Activated CD4-positive, alpha-beta memory T cell treated with anti-CD3 and anti-CD28 coated beads, Interleukin-2, amount 10 ng/mL, durations not matched to agents 7 days and 5 days (primary cell): ENCODE measurements at regions of chr1 and their contacts with region 1.

Region 1: DNA sequence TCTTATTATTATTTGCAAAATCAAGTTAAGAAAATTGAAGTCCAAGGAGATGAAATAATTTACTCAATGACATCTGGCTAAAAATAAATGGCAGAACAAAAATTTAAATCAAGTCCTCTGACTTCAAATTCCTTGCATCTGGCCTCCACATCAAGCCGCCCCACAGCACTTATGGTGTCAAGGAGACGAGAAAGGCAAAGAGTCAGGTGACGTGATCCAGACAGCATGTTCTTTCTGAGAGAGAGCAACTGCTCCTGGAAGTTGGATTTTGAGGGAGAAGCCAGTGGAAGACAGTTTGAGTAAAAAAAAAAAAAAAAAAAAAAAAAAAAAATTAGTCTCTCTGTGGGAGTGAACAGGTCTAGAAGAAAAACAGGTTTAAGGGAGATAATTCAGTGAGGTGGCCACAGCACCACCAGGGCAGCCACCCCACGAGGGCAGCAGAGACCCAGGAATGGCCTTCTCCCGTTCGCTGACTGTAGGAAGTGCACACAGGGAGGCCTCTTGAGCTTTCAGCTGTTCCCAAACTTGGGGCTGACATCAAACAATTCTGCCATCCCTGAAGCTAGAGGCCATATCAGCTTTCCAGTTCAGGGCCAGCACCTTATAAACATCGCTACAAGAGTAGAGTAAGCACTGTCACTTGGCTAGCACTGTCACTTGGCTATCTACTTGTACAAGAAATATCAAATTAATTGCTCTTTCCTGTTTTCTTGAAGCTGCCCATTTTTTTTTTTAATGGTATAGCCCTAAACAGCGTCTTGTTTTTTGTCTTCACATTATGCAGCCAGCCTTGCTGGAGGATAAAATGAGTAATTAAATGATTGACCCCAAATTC is 7.8 kb downstream of the C1orf162 start:
- DNase-seq: peak; percentile 69
- H3K4me3 Mint-ChIP-seq: no peak overlapping the region
- H3K27ac Mint-ChIP-seq: no peak overlapping the region
- H3K4me1 Mint-ChIP-seq: peaks cover 23% of the 10 kb centered on the region
- H3K27me3 Mint-ChIP-seq: peaks cover 42% of the 10 kb centered on the region

Region 2: GRCh38 chr1:111372336-111372965 is 109.2 kb before region 1 on chr1:
- CTCF ChIA-PET with region 1: no interaction called
- POLR2A ChIA-PET with region 1: no interaction called
- DNase-seq: no peak
- H3K4me3 Mint-ChIP-seq: no peak overlapping the region
- H3K27ac Mint-ChIP-seq: no peak overlapping the region
- H3K4me1 Mint-ChIP-seq: no peaks in the 10 kb centered on the region
- H3K27me3 Mint-ChIP-seq: peaks cover 45% of the 10 kb centered on the region

Region 3: GRCh38 chr1:111448918-111449702 is 32.5 kb before region 1 on chr1 and contains the starts of genes ATP5PB and WDR77:
- CTCF ChIA-PET with region 1: interaction called, 3 read pairs
- POLR2A ChIA-PET with region 1: interaction called, 137 read pairs
- DNase-seq: peak; percentile 94
- H3K4me3 Mint-ChIP-seq: peak within 1 kb of the TSS; percentile 100
- H3K27ac Mint-ChIP-seq: peak within 1 kb of the TSS; percentile 95
- H3K4me1 Mint-ChIP-seq: peaks cover 75% of the 10 kb centered on the region
- H3K27me3 Mint-ChIP-seq: no peaks in the 10 kb centered on the region
- total RNA-seq, gene ATP5PB: 272 to 286 TPM
- total RNA-seq, gene WDR77: 26.3 to 28.4 TPM

Region 4: DNA sequence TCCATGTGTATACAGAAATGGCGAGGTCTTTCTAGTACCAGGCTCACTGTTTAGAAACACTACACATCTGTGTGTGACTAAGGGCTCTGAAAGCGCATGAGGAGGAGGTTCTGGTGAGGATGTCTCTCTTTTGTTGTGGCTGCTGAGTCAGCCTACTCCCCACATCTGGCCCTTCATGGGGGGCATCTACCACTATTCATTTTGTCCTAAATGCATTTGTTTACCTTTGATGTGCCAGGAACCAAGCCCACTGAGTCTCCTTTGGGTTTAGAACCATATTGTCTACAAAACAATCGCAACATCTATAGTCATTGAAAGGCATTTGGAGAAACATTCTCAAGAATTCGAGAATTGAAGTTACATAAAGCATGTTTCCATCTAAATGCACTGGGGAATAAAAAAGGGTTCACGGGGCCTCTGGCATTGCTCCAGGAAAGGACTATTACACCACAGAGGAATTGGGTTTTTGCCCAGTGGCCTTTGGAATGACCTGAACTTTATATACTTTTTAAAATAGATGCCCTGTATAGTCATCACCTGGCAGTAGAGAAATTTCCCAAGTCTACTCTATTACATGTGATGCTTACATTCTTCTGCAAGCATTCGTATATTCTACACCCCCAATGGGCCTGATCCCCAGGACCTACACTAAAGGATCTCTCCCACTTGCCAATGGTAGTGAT is 56.9 kb after region 1 on chr1:
- CTCF ChIA-PET with region 1: no interaction called
- POLR2A ChIA-PET with region 1: no interaction called
- DNase-seq: no peak
- H3K4me3 Mint-ChIP-seq: no peak overlapping the region
- H3K27ac Mint-ChIP-seq: no peak overlapping the region
- H3K4me1 Mint-ChIP-seq: peaks cover 3% of the 10 kb centered on the region
- H3K27me3 Mint-ChIP-seq: peaks cover 8% of the 10 kb centered on the region

Region 5: GRCh38 chr1:111592389-111593361 is 111.1 kb after region 1 on chr1:
- CTCF ChIA-PET with region 1: no interaction called
- POLR2A ChIA-PET with region 1: interaction called, 20 read pairs
- DNase-seq: peak; percentile 97
- H3K4me3 Mint-ChIP-seq: peak overlapping the region; percentile 57
- H3K27ac Mint-ChIP-seq: peak overlapping the region; percentile 82
- H3K4me1 Mint-ChIP-seq: peaks cover 73% of the 10 kb centered on the region
- H3K27me3 Mint-ChIP-seq: no peaks in the 10 kb centered on the region

Region 6: GRCh38 chr1:111619635-111620440 is 138.2 kb after region 1 on chr1 and contains the start of gene RAP1A:
- CTCF ChIA-PET with region 1: no interaction called
- POLR2A ChIA-PET with region 1: interaction called, 17 read pairs
- DNase-seq: peak; percentile 95
- H3K4me3 Mint-ChIP-seq: peak within 1 kb of the TSS; percentile 93
- H3K27ac Mint-ChIP-seq: peak within 1 kb of the TSS; percentile 86
- H3K4me1 Mint-ChIP-seq: peaks cover 70% of the 10 kb centered on the region
- H3K27me3 Mint-ChIP-seq: no peaks in the 10 kb centered on the region
- total RNA-seq, gene RAP1A: 219 to 221 TPM

Region 7: GRCh38 chr1:111755331-111756123 is 273.9 kb after region 1 on chr1 and contains the start of gene DDX20:
- CTCF ChIA-PET with region 1: interaction called, 5 read pairs
- POLR2A ChIA-PET with region 1: interaction called, 11 read pairs
- DNase-seq: peak; percentile 94
- H3K4me3 Mint-ChIP-seq: peak within 1 kb of the TSS; percentile 93
- H3K27ac Mint-ChIP-seq: peak within 1 kb of the TSS; percentile 96
- H3K4me1 Mint-ChIP-seq: peaks cover 48% of the 10 kb centered on the region
- H3K27me3 Mint-ChIP-seq: peaks cover 4% of the 10 kb centered on the region
- total RNA-seq, gene DDX20: 11.2 to 11.8 TPM